ENCODE measurements at regions of chr2 and their contacts with region 1.

Region 1: DNA sequence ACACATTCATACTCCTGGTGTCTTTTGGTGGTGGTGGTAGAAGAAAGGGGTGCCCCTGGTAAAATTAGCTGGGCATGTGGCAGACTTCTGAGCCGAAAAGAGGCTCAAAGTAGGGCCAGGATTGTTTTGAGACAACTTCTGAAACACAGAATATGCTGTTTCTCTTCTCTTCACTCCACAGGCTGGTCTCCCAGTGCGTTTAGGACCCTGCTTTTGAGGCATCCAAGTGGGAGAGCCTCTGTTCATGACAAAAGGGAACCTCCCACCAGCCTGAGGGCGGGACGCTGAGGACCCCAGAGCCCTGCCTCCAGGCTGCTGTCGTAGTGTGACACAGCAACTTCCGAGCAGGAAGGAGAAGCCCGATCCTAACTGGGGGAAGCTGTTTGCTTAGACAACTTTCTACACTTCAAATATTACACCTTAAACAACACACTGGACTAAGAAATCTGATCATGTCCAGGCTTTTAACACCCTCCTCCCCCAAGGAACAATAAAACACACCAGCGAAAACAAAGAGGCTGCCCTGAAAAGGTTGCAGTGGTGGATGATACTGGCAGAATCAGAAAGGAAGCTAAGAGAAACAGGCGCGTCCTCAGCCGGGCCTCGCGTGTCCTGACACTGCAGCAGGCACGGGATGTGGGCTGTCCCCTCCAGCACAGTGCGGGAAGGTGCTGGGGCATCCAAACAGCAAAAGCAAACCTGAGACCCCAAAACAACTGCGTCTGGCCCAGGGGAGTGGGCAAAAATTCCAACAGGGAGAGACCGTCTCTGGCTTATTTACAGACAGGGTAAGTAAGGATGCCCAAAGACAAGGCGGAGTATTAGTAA is 9.3 kb downstream of the SERTAD2 start:
- DNase-seq: peak; percentile 59
- ATAC-seq: peak; percentile 77
- H3K4me3 ChIP-seq: peak overlapping the region; percentile 46 to 57
- H3K27ac ChIP-seq: peak overlapping the region; percentile 95
- H3K4me1 ChIP-seq: peaks cover 74 to 100% of the 10 kb centered on the region in 2 experiments
- H3K27me3 ChIP-seq: no peaks in the 10 kb centered on the region
- CTCF ChIP-seq: no peak
- POLR2A ChIP-seq: peak; percentile 47
- RAD21 ChIP-seq: no peak

Region 2: GRCh38 chr2:64228126-64228678 is 416.2 kb before region 1 on chr2:
- CTCF ChIA-PET with region 1: no interaction called
- POLR2A ChIA-PET with region 1: no interaction called
- RAD21 ChIA-PET with region 1: no interaction called
- intact Hi-C with region 1: no loop called
- DNase-seq: peak; percentile 15
- ATAC-seq: peak; percentile 95
- H3K4me3 ChIP-seq: peak overlapping the region; percentile 24 to 51
- H3K27ac ChIP-seq: no peak overlapping the region
- H3K4me1 ChIP-seq: peaks cover 3 to 10% of the 10 kb centered on the region in 2 experiments
- H3K27me3 ChIP-seq: no peaks in the 10 kb centered on the region
- CTCF ChIP-seq: no peak
- POLR2A ChIP-seq: no peak
- RAD21 ChIP-seq: no peak

Region 3: GRCh38 chr2:64767670-64768468 is 123.5 kb after region 1 on chr2:
- CTCF ChIA-PET with region 1: interaction called, 5 read pairs
- POLR2A ChIA-PET with region 1: no interaction called
- RAD21 ChIA-PET with region 1: no interaction called
- intact Hi-C with region 1: loop called (anchors 5 kb)
- DNase-seq: no peak
- ATAC-seq: peak; percentile 82
- H3K4me3 ChIP-seq: peak overlapping the region; percentile 49 to 54
- H3K27ac ChIP-seq: peak overlapping the region; percentile 98
- H3K4me1 ChIP-seq: peaks cover 32 to 51% of the 10 kb centered on the region in 2 experiments
- H3K27me3 ChIP-seq: no peaks in the 10 kb centered on the region
- CTCF ChIP-seq: no peak
- POLR2A ChIP-seq: peak; percentile 43
- RAD21 ChIP-seq: peak; percentile 39

Region 4: GRCh38 chr2:64839844-64840243 is 195.5 kb after region 1 on chr2:
- CTCF ChIA-PET with region 1: interaction called, 15 read pairs
- POLR2A ChIA-PET with region 1: interaction called, 17 read pairs
- RAD21 ChIA-PET with region 1: interaction called in 1 of 2 experiments, 3 read pairs
- intact Hi-C with region 1: loop called (anchors 2 kb)
- DNase-seq: peak; percentile 35
- ATAC-seq: peak; percentile 30
- H3K4me3 ChIP-seq: no peak overlapping the region
- H3K27ac ChIP-seq: peak overlapping the region; percentile 91
- H3K4me1 ChIP-seq: peaks cover 62 to 75% of the 10 kb centered on the region in 2 experiments
- H3K27me3 ChIP-seq: no peaks in the 10 kb centered on the region
- CTCF ChIP-seq: no peak
- POLR2A ChIP-seq: peak; percentile 44
- RAD21 ChIP-seq: no peak

Region 5: DNA sequence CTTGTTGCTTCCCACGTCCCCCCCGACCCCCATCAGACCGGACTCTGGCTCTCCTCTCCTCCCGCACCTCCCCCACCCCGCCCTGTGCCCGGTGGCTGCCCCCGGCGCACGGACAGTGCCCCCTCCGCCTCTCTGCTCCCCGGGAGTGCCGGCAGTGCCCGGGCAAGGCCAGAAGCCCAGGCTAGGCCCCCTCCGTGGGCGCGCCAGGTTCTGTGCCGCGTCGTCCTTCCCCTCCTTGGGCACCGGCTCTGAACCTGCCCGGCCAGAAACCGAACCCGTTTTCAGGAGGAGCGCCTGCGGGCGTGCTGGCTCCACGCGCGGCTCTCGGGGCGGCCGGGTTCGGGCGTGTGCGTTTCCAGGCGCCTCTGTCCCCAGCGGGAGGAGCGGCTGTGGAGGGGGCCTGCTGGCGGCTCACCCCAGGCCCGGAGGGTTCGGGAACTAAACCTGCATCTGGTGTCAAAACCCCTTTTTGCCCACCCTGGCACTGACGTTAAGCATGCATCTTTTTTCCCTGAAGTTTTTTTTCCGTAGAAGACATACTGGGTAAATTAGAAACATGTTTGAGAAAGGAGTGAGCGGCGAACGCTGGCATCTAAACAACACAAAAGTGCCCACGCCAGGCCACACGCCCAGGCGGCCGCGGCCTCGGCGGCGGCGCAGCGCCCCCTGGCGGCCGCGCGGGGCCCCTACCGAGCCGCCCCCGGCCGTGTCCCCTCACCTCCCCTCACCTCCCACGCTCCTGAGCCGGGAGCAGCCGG is 220.9 kb after region 1 on chr2:
- CTCF ChIA-PET with region 1: interaction called, 16 read pairs
- POLR2A ChIA-PET with region 1: interaction called, 3 read pairs
- RAD21 ChIA-PET with region 1: interaction called in 1 of 2 experiments, 4 read pairs
- intact Hi-C with region 1: loop called (anchors 1 kb)
- DNase-seq: no peak
- ATAC-seq: peak; percentile 91
- H3K4me3 ChIP-seq: peak overlapping the region; percentile 45 to 64
- H3K27ac ChIP-seq: peak overlapping the region; percentile 83
- H3K4me1 ChIP-seq: peaks cover 17 to 70% of the 10 kb centered on the region in 2 experiments
- H3K27me3 ChIP-seq: no peaks in the 10 kb centered on the region
- CTCF ChIP-seq: peak in 2 of 3 experiments; percentile 44 to 50; a peak in 4 of 6 replicates
- POLR2A ChIP-seq: no peak
- RAD21 ChIP-seq: no peak

Region 6: DNA sequence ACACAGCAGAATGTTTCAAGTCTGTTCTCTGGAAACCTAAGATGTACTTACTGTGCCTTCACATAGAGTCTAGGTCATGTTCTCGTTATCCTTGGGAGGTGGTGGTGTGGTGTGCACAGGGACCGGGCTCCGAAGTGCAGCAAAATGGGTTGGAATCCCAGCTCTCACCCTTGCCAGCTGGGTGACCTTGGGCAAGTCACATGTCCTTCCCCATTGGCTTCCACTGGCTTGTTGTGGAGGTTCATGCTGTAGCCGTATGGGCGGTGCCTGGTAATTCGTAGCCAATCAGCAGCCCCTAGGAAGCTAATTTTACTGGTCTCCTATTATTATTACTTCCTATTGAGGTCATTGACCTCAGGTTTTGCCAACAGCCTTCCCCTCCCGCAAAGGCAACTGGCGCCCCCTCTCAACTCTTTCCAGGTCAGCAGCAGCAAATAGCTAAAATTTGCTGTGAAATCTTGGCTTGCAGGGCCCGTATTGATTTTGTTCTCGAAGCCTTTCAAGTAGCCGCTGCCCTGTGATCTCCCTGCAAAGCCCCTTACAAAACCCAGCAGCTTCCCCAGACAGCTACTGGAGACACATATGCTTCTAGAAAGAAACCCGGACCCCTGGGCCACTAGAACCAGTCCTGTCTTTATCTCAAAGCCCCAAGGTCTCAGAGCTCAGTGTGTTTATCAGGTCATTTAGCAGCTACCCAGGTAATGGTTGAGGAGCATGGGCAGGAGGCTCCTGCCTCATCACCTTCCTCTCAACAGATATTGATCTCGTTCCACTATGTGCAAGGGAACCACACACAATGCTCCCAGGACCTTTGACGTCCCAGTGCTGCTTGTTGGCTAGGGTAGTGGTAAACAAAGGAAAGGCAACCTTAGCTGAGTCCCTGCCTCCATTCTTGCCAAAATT is 278.3 kb after region 1 on chr2:
- CTCF ChIA-PET with region 1: no interaction called
- POLR2A ChIA-PET with region 1: no interaction called
- RAD21 ChIA-PET with region 1: no interaction called
- intact Hi-C with region 1: no loop called
- DNase-seq: no peak
- ATAC-seq: no peak
- H3K4me3 ChIP-seq: no peak overlapping the region
- H3K27ac ChIP-seq: no peak overlapping the region
- H3K4me1 ChIP-seq: peaks cover 2 to 8% of the 10 kb centered on the region in 2 experiments; a peak in 1 of 4 replicates
- H3K27me3 ChIP-seq: no peaks in the 10 kb centered on the region
- CTCF ChIP-seq: no peak
- POLR2A ChIP-seq: no peak
- RAD21 ChIP-seq: no peak

Measured in HCT116 (cell line).